ENCODE measurements at regions of chr6 and their contacts with region 1.

Region 1: GRCh38 chr6:56843573-56844349 is 111.1 kb upstream of the BEND6 start:
- DNase-seq: peak; percentile 88
- ATAC-seq: peak; percentile 95

Region 2: GRCh38 chr6:56771189-56771588 is 72.6 kb before region 1 on chr6:
- intact Hi-C with region 1: loop called (anchors 2 kb)
- DNase-seq: no peak
- ATAC-seq: no peak

Region 3: DNA sequence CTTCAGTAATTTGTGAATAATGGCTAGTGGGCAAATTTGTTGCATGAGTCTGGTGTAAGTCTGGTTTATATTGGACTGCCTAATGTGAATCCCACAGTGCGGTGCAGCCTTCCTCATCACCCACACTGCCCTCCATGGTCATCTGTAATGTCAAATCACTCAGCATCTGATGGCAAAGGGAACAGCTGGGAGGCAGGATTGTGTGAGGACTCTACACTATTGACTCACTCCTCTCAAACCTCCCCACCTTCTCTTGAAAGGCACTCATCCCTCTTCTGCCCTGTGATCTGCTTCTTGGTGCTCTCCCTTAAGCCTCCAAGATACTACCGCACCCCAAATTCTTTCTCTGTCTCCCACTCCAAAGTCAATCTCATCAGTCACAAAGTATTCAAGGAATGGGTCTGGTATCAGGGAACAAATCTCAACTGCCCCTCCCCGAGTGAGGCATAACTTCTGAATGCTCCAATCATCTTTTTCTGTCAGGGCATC is 34.8 kb before region 1 on chr6:
- intact Hi-C with region 1: loop called (anchors 5 kb)
- DNase-seq: no peak
- ATAC-seq: peak; percentile 46

Region 4: GRCh38 chr6:56902641-56903464 is 59.1 kb after region 1 on chr6:
- intact Hi-C with region 1: no loop called
- DNase-seq: no peak
- ATAC-seq: peak; percentile 34

Measured in Right ventricle myocardium inferior (tissue), 1 donor.